Endothelial cell of umbilical vein (primary cell): ENCODE measurements at regions of chr20 and their contacts with region 1.

Region 1: DNA sequence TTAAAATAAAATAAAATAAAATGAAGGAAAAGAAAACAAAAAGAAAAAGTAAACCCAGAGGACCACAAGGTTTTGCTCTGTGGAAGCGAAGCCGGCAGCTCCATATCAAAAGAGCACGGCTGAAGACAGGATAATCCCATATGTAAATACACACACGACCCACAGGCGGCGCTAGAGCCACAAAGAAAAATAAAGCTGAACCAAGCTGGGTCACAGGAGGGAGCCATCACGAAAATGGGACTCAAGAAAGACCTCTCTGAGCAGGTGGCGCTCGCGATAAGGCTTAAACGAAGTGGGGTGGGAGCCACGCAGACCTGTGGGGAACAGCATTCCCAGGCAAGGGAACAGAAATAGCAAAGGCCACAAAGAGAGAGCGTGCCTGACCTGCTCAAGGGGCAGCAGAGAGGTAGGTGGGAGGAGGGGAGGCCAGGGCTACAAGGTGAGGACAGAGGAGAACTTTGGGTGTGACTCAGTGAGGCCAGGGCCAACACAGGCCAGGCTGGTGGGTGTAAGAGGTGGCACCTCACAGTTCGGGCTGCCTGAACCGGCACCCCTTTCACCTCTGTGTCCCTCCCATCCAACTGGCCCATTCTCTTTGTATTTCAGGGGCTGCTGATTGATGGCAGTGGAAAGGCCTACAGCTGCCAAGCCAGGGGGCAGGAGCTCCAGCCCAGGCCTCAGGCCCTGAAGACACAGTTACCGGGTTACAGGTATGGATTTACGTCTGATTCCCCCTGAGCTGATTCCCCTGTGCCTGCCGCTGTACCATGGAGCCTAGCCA is 26.0 kb downstream of the PTGIS start:
- DNase-seq: peak; percentile 82
- H3K4me3 ChIP-seq: no peak overlapping the region
- H3K27ac ChIP-seq: no peak overlapping the region
- H3K4me1 ChIP-seq: no peaks in the 10 kb centered on the region
- H3K27me3 ChIP-seq: no peaks in the 10 kb centered on the region
- CTCF ChIP-seq: peak; percentile 73 to 82
- POLR2A ChIP-seq: no peak

Region 2: GRCh38 chr20:49508435-49509199 is 33.3 kb before region 1 on chr20:
- CTCF ChIA-PET with region 1: interaction called, 17 read pairs
- POLR2A ChIA-PET with region 1: no interaction called
- dilution Hi-C with region 1: no loop called
- intact Hi-C with region 1: no loop called
- DNase-seq: peak; percentile 44
- H3K4me3 ChIP-seq: no peak overlapping the region
- H3K27ac ChIP-seq: no peak overlapping the region
- H3K4me1 ChIP-seq: no peaks in the 10 kb centered on the region
- H3K27me3 ChIP-seq: peaks cover 4 to 8% of the 10 kb centered on the region in 2 experiments
- CTCF ChIP-seq: peak; percentile 35 to 46
- POLR2A ChIP-seq: no peak

Region 3: DNA sequence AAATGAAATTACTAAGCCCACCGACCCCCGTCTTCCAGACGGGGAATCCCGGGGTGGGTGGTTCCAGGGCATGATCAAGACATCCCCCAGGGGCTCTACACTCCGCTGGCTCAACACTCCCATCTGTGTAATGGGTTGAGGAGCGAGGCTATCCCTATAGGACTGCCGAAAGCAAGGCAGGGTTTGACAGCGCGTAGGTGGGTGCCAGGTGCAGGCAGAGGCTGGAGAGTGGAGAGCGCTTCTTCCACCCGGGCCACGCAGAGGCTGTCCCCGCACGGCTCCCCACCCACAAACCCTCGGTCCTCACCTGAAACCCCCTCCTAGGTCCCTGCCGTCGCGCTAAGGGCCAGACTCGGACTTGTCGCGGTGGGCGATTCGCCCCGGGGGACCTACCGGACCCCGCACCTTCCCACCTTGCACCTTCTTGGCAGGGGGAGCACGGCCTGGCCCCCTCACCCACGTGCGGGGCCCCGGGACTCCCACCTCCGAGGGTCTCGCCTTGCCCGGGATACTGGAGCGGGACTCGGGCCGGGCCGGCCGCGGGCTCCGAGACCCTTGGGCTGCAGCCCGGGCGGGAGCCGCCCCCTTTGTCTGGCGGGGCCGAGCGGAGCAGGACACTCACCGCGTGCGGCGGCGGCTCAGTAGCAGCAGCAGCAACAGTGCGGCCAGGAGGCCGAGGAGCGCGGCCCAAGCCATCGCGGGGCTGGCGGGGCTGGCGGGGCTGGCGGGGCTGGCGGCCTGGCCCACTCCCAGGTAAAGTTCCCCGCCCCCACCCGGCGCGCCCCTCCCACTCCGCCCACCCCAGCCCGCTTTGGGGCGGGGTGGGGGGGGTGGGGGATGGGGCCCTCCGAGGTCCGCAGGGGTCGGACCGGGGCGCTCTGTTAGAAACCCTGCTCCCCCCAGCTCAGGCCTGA is 25.8 kb after region 1 on chr20 and contains the start of gene PTGIS:
- CTCF ChIA-PET with region 1: interaction called, 26 read pairs
- POLR2A ChIA-PET with region 1: interaction called, 3 read pairs
- dilution Hi-C with region 1: no loop called
- intact Hi-C with region 1: loop called (anchors 1 kb)
- DNase-seq: no peak
- H3K4me3 ChIP-seq: peak within 1 kb of the TSS; percentile 29 to 40 (median 36)
- H3K27ac ChIP-seq: no peak within 1 kb of the TSS
- H3K4me1 ChIP-seq: peaks cover 26% of the 10 kb centered on the region
- H3K27me3 ChIP-seq: no peaks in the 10 kb centered on the region
- CTCF ChIP-seq: no peak
- POLR2A ChIP-seq: no peak
- total RNA-seq, gene PTGIS: 4.4 and 6.2 TPM in 2 replicates

Region 4: DNA sequence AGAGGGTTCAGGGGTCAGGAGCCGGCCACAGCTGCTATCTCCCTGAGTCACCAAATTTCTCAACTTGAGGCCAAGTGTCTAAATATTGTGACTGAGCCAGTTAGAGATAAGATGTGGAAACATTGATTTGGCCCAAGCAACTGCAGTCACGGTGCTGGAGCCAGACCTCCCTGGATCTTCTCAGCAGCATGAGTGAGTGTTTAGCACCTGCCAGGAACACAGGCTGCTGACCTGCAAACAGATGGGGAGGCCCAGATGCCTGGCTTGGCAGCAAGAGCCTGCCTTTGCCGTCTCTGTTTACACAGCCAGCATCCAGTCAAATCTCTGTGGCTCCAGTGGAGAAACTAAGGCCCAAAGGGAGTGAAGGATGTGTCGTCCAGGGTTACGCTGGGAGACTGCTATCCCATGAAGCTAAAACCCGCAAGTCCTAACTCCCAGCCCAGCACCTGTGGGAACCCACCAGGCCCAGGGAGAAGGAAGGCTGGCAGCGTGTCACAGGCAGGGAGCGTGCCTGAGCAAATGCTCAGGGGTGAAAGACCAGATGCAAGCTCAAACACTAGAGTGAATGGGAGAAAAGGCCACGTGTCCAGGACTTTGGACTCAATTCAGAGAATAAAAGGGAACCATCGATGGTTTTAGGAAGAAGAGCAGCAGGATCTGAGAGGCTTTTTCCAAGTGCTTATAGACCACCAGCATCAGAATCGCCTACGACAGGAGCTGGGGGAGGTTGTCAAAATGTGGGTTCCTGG is 41.9 kb after region 1 on chr20:
- CTCF ChIA-PET with region 1: interaction called, 45 read pairs
- POLR2A ChIA-PET with region 1: no interaction called
- dilution Hi-C with region 1: no loop called
- intact Hi-C with region 1: no loop called
- DNase-seq: peak; percentile 92
- H3K4me3 ChIP-seq: no peak overlapping the region
- H3K27ac ChIP-seq: no peak overlapping the region
- H3K4me1 ChIP-seq: peaks cover 2% of the 10 kb centered on the region
- H3K27me3 ChIP-seq: no peaks in the 10 kb centered on the region
- CTCF ChIP-seq: no peak
- POLR2A ChIP-seq: no peak

Region 5: GRCh38 chr20:49888345-49888966 is 346.5 kb after region 1 on chr20:
- CTCF ChIA-PET with region 1: interaction called, 37 read pairs
- POLR2A ChIA-PET with region 1: no interaction called
- dilution Hi-C with region 1: no loop called
- intact Hi-C with region 1: loop called (anchors 1 kb)
- DNase-seq: peak; percentile 73
- H3K4me3 ChIP-seq: no peak overlapping the region
- H3K27ac ChIP-seq: no peak overlapping the region
- H3K4me1 ChIP-seq: peaks cover 20% of the 10 kb centered on the region
- H3K27me3 ChIP-seq: no peaks in the 10 kb centered on the region
- CTCF ChIP-seq: peak; percentile 80 to 88
- POLR2A ChIP-seq: no peak